Caco-2 (cell line): ENCODE measurements at regions of chr2 and their contacts with region 1.

Region 1: DNA sequence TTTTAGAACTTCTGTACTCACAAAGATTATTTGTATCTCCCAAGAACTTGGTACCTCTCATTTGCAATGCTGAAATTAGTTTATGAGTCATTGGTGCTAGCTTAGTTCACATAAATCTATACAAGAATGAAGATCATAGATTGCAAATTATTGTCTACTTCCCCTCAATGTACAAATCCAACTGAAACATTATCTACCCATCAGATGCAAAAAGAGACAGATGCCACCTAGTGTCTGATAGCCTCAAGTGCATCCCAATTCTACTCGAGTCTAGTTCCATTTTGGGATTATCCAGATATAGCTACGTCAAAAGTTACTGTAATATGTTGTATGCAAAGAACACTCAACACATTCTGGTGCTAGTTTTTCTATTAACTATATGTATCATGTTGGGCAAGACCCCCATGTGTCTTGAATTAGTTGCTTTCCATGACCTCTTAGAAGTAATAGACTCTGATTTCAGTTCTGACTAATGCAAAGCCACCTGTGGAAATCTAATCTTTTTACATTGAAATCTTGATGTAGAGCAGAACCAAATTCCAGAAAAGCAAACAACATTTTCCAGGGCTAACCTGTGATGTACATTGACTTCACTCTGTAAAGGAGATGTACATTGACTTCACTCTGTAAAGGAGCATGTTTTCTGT is 210.0 kb downstream of the RBM43 start:
- DNase-seq: peak; percentile 45
- H3K4me3 ChIP-seq: no peak overlapping the region
- H3K4me3 Mint-ChIP-seq: no peak overlapping the region
- H3K27ac Mint-ChIP-seq: no peak overlapping the region
- H3K4me1 ChIP-seq: peaks cover 10% of the 10 kb centered on the region
- H3K4me1 Mint-ChIP-seq: no peaks in the 10 kb centered on the region
- H3K27me3 ChIP-seq: peaks cover 1% of the 10 kb centered on the region; the same call in 1 of the 2 replicates
- H3K27me3 Mint-ChIP-seq: peaks cover 5% of the 10 kb centered on the region
- CTCF ChIP-seq: peak; percentile 58 to 79

Region 2: GRCh38 chr2:150644298-150645067 is 407.2 kb before region 1 on chr2:
- CTCF ChIA-PET with region 1: no interaction called
- POLR2A ChIA-PET with region 1: no interaction called
- intact Hi-C with region 1: loop called (anchors 10 kb)
- DNase-seq: no peak
- H3K4me3 ChIP-seq: no peak overlapping the region
- H3K4me3 Mint-ChIP-seq: no peak overlapping the region
- H3K27ac Mint-ChIP-seq: no peak overlapping the region
- H3K4me1 ChIP-seq: peaks cover 33% of the 10 kb centered on the region
- H3K4me1 Mint-ChIP-seq: peaks cover 29% of the 10 kb centered on the region
- H3K27me3 ChIP-seq: no peaks in the 10 kb centered on the region
- H3K27me3 Mint-ChIP-seq: no peaks in the 10 kb centered on the region
- CTCF ChIP-seq: no peak

Region 3: DNA sequence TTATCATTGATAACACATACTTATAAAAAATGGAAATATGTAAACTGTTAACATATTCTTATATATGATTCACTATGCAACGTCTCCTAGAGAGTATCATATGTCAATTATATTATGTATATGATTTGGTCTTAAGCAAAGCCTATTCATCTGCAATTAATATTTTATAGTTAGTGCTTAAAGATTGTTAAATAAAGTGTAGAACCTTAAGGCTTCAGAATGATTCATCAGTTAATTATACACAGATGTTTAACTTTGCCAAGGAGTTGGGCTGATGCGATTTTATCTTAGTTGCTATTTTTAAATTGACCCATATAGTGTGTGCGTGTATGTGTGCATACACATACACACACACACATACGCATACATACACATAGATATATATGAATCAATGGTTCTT is 113.2 kb before region 1 on chr2:
- CTCF ChIA-PET with region 1: no interaction called
- POLR2A ChIA-PET with region 1: no interaction called
- intact Hi-C with region 1: no loop called
- DNase-seq: no peak
- H3K4me3 ChIP-seq: no peak overlapping the region
- H3K4me3 Mint-ChIP-seq: no peak overlapping the region
- H3K27ac Mint-ChIP-seq: no peak overlapping the region
- H3K4me1 ChIP-seq: no peaks in the 10 kb centered on the region
- H3K4me1 Mint-ChIP-seq: no peaks in the 10 kb centered on the region
- H3K27me3 ChIP-seq: no peaks in the 10 kb centered on the region
- H3K27me3 Mint-ChIP-seq: no peaks in the 10 kb centered on the region
- CTCF ChIP-seq: no peak

Region 4: GRCh38 chr2:151085181-151085611 is 33.5 kb after region 1 on chr2:
- CTCF ChIA-PET with region 1: no interaction called
- POLR2A ChIA-PET with region 1: no interaction called
- intact Hi-C with region 1: no loop called
- DNase-seq: no peak
- H3K4me3 ChIP-seq: no peak overlapping the region
- H3K4me3 Mint-ChIP-seq: no peak overlapping the region
- H3K27ac Mint-ChIP-seq: no peak overlapping the region
- H3K4me1 ChIP-seq: no peaks in the 10 kb centered on the region
- H3K4me1 Mint-ChIP-seq: no peaks in the 10 kb centered on the region
- H3K27me3 ChIP-seq: no peaks in the 10 kb centered on the region; the same call in 1 of the 2 replicates
- H3K27me3 Mint-ChIP-seq: peaks cover 19% of the 10 kb centered on the region
- CTCF ChIP-seq: no peak

Region 5: GRCh38 chr2:151150331-151151320 is 98.9 kb after region 1 on chr2:
- CTCF ChIA-PET with region 1: no interaction called
- POLR2A ChIA-PET with region 1: no interaction called
- intact Hi-C with region 1: no loop called
- DNase-seq: no peak
- H3K4me3 ChIP-seq: no peak overlapping the region
- H3K4me3 Mint-ChIP-seq: no peak overlapping the region
- H3K27ac Mint-ChIP-seq: no peak overlapping the region
- H3K4me1 ChIP-seq: no peaks in the 10 kb centered on the region
- H3K4me1 Mint-ChIP-seq: no peaks in the 10 kb centered on the region
- H3K27me3 ChIP-seq: no peaks in the 10 kb centered on the region
- H3K27me3 Mint-ChIP-seq: peaks cover 14% of the 10 kb centered on the region
- CTCF ChIP-seq: no peak

Region 6: GRCh38 chr2:151664520-151664919 is 612.8 kb after region 1 on chr2:
- CTCF ChIA-PET with region 1: no interaction called
- POLR2A ChIA-PET with region 1: no interaction called
- intact Hi-C with region 1: no loop called
- DNase-seq: no peak
- H3K4me3 ChIP-seq: no peak overlapping the region
- H3K4me3 Mint-ChIP-seq: no peak overlapping the region
- H3K27ac Mint-ChIP-seq: no peak overlapping the region
- H3K4me1 ChIP-seq: no peaks in the 10 kb centered on the region
- H3K4me1 Mint-ChIP-seq: peaks cover 6% of the 10 kb centered on the region
- H3K27me3 ChIP-seq: no peaks in the 10 kb centered on the region
- H3K27me3 Mint-ChIP-seq: no peaks in the 10 kb centered on the region
- CTCF ChIP-seq: no peak